Mammary epithelial cell (primary cell): ENCODE measurements at regions of chr5 and their contacts with region 1.

Region 1: DNA sequence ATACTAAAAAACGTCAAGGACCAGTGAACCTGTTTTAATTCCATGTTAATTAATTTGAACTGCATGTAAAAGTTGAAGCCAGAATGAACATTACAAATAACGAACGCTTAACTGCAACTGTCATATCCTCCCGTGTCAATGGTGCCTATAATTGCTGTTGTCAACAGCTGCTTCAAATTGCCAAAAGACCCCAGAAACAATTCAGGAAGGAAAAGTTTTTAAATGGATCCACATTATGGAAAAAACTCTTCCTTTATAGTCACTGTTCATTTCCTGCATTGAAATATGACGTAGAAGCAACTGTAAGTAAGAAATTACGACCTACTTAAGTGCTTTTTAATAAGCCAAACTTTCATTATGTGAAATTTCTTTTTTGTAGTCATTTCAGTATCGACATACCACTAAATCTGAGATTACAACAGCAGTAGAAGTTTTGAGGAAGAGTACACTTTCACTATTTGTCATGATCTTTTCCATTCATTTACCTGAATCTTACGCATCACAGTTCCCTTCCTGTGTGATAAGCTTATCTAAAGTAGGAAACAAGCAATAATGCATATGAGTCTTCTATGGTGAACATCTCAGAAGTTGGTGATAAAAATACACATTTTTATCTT is 37.8 kb downstream of the MEF2C start:
- DNase-seq: no peak
- H3K4me3 ChIP-seq: no peak overlapping the region
- H3K27ac ChIP-seq: no peak overlapping the region
- H3K4me1 ChIP-seq: no peaks in the 10 kb centered on the region
- H3K27me3 ChIP-seq: no peaks in the 10 kb centered on the region
- CTCF ChIP-seq: no peak

Region 2: GRCh38 chr5:88778736-88779135 is 66.5 kb before region 1 on chr5:
- CTCF ChIA-PET with region 1: interaction called, 14 read pairs
- dilution Hi-C with region 1: no loop called
- in situ Hi-C with region 1: no loop called
- intact Hi-C with region 1: no loop called
- DNase-seq: no peak
- H3K4me3 ChIP-seq: no peak overlapping the region
- H3K27ac ChIP-seq: no peak overlapping the region
- H3K4me1 ChIP-seq: no peaks in the 10 kb centered on the region
- H3K27me3 ChIP-seq: no peaks in the 10 kb centered on the region
- CTCF ChIP-seq: no peak